GM12878 (cell line): ENCODE measurements at regions of chr11 and their contacts with region 1.

Region 1: DNA sequence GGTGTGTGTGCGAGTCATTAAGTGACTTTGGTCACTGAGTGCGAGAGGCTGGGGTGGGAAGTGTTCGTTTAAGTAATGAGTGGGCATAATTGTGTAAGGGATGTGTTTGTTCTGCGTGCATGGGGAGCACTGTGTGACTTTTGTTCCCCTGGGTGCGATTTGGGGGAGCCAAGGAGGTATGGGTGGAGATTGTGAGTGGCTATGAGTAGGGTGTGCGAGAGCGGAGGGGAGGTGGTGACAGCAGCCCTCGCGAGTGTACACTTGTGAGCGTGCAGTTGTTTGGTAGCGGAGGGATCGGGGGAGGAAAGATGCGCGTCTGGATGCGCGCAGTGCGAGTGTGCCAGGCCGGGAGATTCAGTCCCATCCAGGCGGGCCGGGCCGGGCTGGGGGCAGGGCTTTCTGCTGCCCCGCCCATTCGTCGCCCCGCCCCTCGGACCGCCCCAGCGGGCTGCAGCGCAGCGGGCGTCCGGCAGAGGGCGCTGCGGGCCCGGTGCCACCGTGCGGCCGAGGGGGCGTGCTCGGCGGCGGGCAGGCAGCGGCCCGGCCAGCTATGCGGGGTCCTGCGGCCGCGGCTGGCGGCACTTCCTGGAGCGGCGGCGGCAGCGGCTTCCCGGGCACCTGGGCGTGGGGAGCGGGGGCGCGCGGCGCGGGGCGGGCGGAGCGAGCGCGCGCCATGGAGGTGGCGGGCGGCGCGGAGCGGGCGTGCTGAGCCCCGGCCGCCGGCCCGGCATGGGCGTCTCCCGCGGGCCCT is at the start of gene DGKZ:
- DNase-seq: no peak
- ATAC-seq: peak; percentile 69
- H3K4me3 ChIP-seq: peak within 1 kb of the TSS; percentile 88
- H3K27ac ChIP-seq: peak within 1 kb of the TSS; percentile 71
- H3K4me1 ChIP-seq: peaks cover 39% of the 10 kb centered on the region
- H3K27me3 ChIP-seq: no peaks in the 10 kb centered on the region
- CTCF ChIP-seq: peak; percentile 63 to 92 (median 64); a peak in 4 of 6 replicates
- EP300 ChIP-seq: no peak
- POLR2A ChIP-seq: no peak; the same call in 1 of the 2 replicates
- RAD21 ChIP-seq: peak; percentile 64
- polyA plus RNA-seq, gene DGKZ: 0.50 to 1.6 TPM

Region 2: DNA sequence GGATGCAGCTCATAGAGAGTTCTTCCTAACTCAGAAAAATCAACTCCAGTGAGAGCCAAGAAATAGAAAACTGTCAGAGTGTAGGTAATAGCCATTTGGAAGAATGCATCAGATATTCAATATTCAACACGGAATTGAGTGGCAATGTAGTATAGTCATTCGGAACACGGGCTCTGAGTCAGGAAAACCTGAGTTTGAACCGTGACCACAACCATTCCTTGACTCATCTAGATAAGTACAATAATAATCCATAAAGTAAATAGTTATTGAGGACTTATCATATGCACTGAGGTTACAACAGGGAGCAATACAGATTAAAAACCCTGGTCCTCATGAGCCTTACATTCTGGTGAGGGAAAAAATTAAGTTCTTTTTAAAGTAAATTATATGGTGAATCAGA is 163.2 kb before region 1 on chr11:
- CTCF ChIA-PET with region 1: no interaction called
- POLR2A ChIA-PET with region 1: no interaction called
- RAD21 ChIA-PET with region 1: no interaction called
- SMC1A ChIA-PET with region 1: no interaction called
- in situ Hi-C with region 1: no loop called
- intact Hi-C with region 1: no loop called
- DNase-seq: no peak
- ATAC-seq: no peak
- H3K4me3 ChIP-seq: no peak overlapping the region
- H3K27ac ChIP-seq: no peak overlapping the region
- H3K4me1 ChIP-seq: no peaks in the 10 kb centered on the region
- H3K27me3 ChIP-seq: peaks cover 1 to 3% of the 10 kb centered on the region in 2 experiments; a peak in 1 of 4 replicates
- CTCF ChIP-seq: no peak
- EP300 ChIP-seq: no peak
- POLR2A ChIP-seq: no peak
- RAD21 ChIP-seq: no peak

Region 3: GRCh38 chr11:46315033-46315738 is 31.9 kb before region 1 on chr11:
- CTCF ChIA-PET with region 1: interaction called, 25 read pairs
- POLR2A ChIA-PET with region 1: interaction called, 3 read pairs
- RAD21 ChIA-PET with region 1: interaction called, 5 read pairs
- SMC1A ChIA-PET with region 1: interaction called, 11 read pairs
- in situ Hi-C with region 1: no loop called
- intact Hi-C with region 1: no loop called
- DNase-seq: no peak
- ATAC-seq: peak; percentile 86
- H3K4me3 ChIP-seq: no peak overlapping the region
- H3K27ac ChIP-seq: no peak overlapping the region
- H3K4me1 ChIP-seq: peaks cover 9% of the 10 kb centered on the region
- H3K27me3 ChIP-seq: no peaks in the 10 kb centered on the region
- CTCF ChIP-seq: peak; percentile 80 to 97 (median 97)
- EP300 ChIP-seq: no peak
- POLR2A ChIP-seq: no peak
- RAD21 ChIP-seq: peak; percentile 78

Region 4: DNA sequence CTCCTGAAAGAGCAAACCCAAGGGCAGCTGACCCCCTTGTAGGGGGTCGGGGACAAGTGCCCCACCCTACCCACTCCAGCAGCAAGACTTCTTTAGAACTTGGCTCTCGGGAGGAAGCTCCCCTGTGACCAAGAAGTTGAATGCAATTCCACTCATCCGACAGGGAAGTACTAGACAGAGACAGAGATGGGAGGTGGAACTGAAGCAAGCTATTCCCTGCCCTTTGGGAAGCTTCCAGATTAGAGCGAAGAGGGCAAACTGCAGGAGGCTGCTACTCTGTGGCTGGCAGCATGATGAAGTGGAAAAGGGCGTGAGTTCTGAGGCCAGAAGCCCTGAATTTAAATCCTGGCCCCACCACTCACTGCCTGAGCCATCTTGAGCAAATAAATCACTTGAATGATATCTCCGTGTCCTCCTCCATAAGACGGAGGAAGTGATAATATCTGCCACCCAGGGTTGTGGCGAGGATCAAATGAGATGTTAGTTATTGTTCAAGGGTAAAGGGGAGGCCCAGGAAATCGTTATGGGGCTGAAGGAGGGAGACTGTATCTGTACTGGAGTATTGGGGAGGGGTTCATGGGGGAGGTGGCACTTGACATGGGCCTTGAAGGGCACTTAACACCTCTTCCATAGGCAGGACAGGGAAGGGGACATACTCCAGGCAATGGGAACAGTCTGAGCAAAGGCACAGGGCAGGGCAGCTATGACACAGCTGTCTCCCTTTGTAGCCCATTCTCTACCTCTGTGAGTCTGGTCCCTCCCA is 16.0 kb before region 1 on chr11:
- CTCF ChIA-PET with region 1: interaction called, 10 read pairs
- POLR2A ChIA-PET with region 1: no interaction called
- RAD21 ChIA-PET with region 1: interaction called, 4 read pairs
- SMC1A ChIA-PET with region 1: no interaction called
- in situ Hi-C with region 1: no loop called
- intact Hi-C with region 1: no loop called
- DNase-seq: no peak
- ATAC-seq: 0 out of 3 replicates have a peak, but pooled peaks have one; percentile 23
- H3K4me3 ChIP-seq: no peak overlapping the region
- H3K27ac ChIP-seq: no peak overlapping the region
- H3K4me1 ChIP-seq: no peaks in the 10 kb centered on the region; the same call in 1 of the 2 replicates
- H3K27me3 ChIP-seq: peaks cover 17 to 30% of the 10 kb centered on the region in 2 experiments
- CTCF ChIP-seq: no peak
- EP300 ChIP-seq: no peak
- POLR2A ChIP-seq: no peak
- RAD21 ChIP-seq: no peak

Region 5: GRCh38 chr11:46361283-46362155 is 14.5 kb after region 1 on chr11:
- CTCF ChIA-PET with region 1: interaction called, 423 read pairs
- POLR2A ChIA-PET with region 1: interaction called, 32 read pairs
- RAD21 ChIA-PET with region 1: interaction called, 38 read pairs
- SMC1A ChIA-PET with region 1: interaction called, 70 read pairs
- in situ Hi-C with region 1: no loop called
- intact Hi-C with region 1: no loop called
- DNase-seq: peak; percentile 44
- ATAC-seq: peak; percentile 97
- H3K4me3 ChIP-seq: peak overlapping the region; percentile 65
- H3K27ac ChIP-seq: peak overlapping the region; percentile 90
- H3K4me1 ChIP-seq: peaks cover 20% of the 10 kb centered on the region
- H3K27me3 ChIP-seq: no peaks in the 10 kb centered on the region
- CTCF ChIP-seq: no peak
- EP300 ChIP-seq: peak; percentile 33 to 43; a peak in 2 of 4 replicates
- POLR2A ChIP-seq: peak; percentile 94
- RAD21 ChIP-seq: no peak

Region 6: GRCh38 chr11:46367244-46367915 is 20.3 kb after region 1 on chr11:
- CTCF ChIA-PET with region 1: interaction called, 423 read pairs
- POLR2A ChIA-PET with region 1: interaction called, 32 read pairs
- RAD21 ChIA-PET with region 1: interaction called, 38 read pairs
- SMC1A ChIA-PET with region 1: interaction called, 70 read pairs
- in situ Hi-C with region 1: no loop called
- intact Hi-C with region 1: loop called (anchors 1 kb)
- DNase-seq: no peak
- ATAC-seq: peak; percentile 92
- H3K4me3 ChIP-seq: no peak overlapping the region
- H3K27ac ChIP-seq: no peak overlapping the region
- H3K4me1 ChIP-seq: peaks cover 7% of the 10 kb centered on the region
- H3K27me3 ChIP-seq: no peaks in the 10 kb centered on the region
- CTCF ChIP-seq: peak; percentile 77 to 94 (median 80)
- EP300 ChIP-seq: no peak
- POLR2A ChIP-seq: no peak
- RAD21 ChIP-seq: peak; percentile 62